HepG2 (cell line): ENCODE measurements at regions of chr17 and their contacts with region 1.

Region 1: GRCh38 chr17:57561072-57561861 is 183.8 kb downstream of the CCDC182 start:
- DNase-seq: peak; percentile 99
- ATAC-seq: peak; percentile 93
- H3K4me3 ChIP-seq: peak overlapping the region in 2 of 3 experiments; percentile 21 to 49; a peak in 4 of 6 replicates
- H3K27ac ChIP-seq: peak overlapping the region; percentile 82
- H3K4me1 ChIP-seq: peaks cover 65% of the 10 kb centered on the region
- H3K27me3 ChIP-seq: no peaks in the 10 kb centered on the region
- CTCF ChIP-seq: peak; percentile 51
- EP300 ChIP-seq: peak; percentile 99 to 100
- POLR2A ChIP-seq: peak; percentile 60 to 71
- RAD21 ChIP-seq: peak; percentile 77

Region 2: DNA sequence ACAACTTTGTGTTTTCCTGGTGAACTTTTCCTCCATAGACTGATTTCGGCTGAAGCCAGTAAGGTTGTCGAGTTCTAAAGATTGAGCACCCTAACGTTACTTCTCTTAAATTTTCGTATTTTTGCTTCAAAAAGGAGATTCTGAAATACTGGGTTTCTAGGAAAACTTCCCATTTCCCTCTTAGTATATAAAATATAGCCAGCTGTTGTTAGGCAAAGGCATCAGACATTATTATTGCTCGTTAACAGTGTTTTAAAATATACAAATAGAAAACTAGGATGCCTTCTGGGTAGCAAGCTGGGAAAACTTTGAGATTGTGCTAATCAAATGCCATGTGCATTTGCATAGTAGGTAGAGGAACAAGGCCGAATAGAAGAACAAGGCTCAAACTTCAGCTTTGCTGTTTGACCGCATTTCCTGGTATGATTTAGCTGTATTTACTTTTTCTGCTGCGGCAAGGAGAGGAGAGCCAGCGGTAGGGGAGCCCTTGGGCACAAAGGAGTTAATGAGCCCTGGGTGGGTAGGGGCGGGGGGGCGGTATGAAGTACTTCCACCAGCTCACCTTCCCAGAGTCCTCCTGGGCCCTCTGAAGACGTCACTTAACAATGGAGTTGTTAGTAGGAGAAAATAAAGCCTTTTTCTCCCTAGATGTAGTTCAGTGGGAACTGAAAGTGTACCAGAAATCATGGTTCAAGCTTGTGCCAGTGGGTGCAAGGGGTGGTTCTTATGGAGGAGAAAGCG is 153.0 kb before region 1 on chr17:
- CTCF ChIA-PET with region 1: no interaction called
- POLR2A ChIA-PET with region 1: interaction called, 14 read pairs
- in situ Hi-C with region 1: no loop called
- intact Hi-C with region 1: no loop called
- DNase-seq: peak; percentile 86
- ATAC-seq: peak; percentile 27
- H3K4me3 ChIP-seq: peak overlapping the region; percentile 26 to 57 (median 51)
- H3K27ac ChIP-seq: peak overlapping the region; percentile 96
- H3K4me1 ChIP-seq: peaks cover 100% of the 10 kb centered on the region
- H3K27me3 ChIP-seq: no peaks in the 10 kb centered on the region
- CTCF ChIP-seq: no peak
- EP300 ChIP-seq: peak in 1 of 2 experiments; percentile 41; a peak in 1 of 4 replicates
- POLR2A ChIP-seq: peak in 1 of 2 experiments; percentile 39; a peak in 1 of 4 replicates
- RAD21 ChIP-seq: no peak

Region 3: GRCh38 chr17:57455063-57455914 is 106.0 kb before region 1 on chr17:
- CTCF ChIA-PET with region 1: interaction called, 3 read pairs
- POLR2A ChIA-PET with region 1: interaction called, 13 read pairs
- in situ Hi-C with region 1: loop called (anchors 5 kb)
- intact Hi-C with region 1: loop called (anchors 1 kb)
- DNase-seq: no peak
- ATAC-seq: no peak
- H3K4me3 ChIP-seq: no peak overlapping the region
- H3K27ac ChIP-seq: no peak overlapping the region
- H3K4me1 ChIP-seq: peaks cover 22% of the 10 kb centered on the region
- H3K27me3 ChIP-seq: no peaks in the 10 kb centered on the region
- CTCF ChIP-seq: no peak
- EP300 ChIP-seq: no peak
- POLR2A ChIP-seq: no peak
- RAD21 ChIP-seq: no peak

Region 4: DNA sequence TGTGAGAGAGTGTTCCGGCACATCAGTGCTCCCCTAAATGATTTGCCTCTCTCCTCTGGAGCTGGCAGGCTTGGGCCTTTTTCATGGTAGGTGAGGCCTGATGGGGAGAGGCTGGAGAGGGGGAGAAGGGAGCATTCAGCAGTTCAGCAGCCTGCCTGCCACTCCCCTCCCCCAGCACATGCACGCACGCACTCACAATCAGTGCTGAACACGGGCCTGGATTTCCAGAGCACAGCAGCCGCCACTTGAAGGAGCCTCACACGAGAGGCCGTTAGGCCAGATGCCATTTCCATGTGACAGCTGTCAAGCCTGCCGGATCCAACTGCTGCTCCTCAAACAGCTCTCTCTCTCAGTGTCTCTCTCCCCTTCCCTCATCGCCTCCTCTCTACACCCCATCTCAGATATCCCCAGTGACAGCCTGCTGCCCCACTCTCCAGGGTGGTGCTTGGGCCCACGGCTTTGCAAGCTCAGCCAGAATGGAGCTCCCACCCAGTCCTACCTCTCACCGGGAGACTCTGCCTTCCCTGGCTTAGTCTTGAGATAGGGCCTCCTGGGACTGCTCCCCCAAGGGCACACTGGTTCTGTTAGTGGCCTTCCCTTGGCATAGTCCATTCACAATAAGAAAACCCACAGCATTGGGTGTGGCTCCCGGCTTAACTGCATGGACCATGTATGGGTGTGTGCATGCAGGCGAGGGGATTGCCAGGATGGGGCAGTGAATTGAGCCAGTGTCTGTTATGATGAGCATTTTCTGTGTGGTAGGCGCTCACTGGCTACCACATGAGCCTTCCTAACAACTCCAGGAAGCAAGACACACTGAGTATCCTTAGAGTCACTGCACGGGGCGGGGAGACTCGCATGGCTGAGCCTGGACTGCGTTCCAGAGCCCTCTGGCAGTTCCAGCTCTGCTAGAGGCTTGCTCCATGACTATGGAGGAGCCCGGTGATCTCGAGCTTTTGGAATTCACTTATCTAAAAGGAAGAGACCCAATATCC is 42.4 kb before region 1 on chr17:
- CTCF ChIA-PET with region 1: no interaction called
- POLR2A ChIA-PET with region 1: interaction called, 65 read pairs
- in situ Hi-C with region 1: no loop called
- intact Hi-C with region 1: loop called (anchors 1 kb)
- DNase-seq: no peak
- ATAC-seq: no peak
- H3K4me3 ChIP-seq: no peak overlapping the region
- H3K27ac ChIP-seq: peak overlapping the region; percentile 95
- H3K4me1 ChIP-seq: peaks cover 89% of the 10 kb centered on the region
- H3K27me3 ChIP-seq: no peaks in the 10 kb centered on the region; a peak in 1 of 5 replicates
- CTCF ChIP-seq: no peak
- EP300 ChIP-seq: no peak
- POLR2A ChIP-seq: no peak
- RAD21 ChIP-seq: no peak

Region 5: DNA sequence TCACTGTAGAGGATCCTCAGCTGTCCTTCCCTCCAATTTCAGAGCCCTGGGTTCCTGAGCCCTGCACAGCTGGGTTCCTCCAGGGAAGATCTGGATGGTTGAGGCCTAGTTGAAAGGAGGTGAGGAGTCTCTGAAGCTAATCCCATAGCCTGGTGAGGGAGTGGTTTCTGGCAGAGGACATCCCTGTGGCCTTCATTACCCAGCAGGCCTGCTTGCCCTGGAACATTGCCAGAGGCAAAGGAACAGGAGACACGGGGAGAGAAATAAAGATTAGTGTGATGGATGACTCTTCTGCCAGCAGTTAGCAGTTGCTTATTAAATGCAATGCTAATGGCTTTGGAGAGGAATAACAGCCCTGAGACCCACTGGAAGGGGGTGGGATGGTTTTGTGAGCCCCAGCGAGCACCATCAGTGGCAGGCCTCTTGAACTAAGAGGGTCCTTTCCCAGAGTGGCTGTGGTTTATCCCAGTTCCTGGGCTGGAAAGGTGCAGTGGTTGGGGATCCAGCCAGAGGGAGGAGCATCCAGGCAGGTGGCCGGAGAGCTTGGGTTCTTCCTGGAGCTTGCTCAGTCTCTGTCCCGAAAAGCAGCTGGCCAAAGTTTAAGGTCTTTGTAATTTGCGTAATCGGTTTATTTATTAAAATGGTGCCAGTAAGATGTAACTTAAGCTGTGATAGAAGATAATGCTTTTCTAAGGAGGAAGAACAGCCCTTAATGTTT is 25.9 kb before region 1 on chr17:
- CTCF ChIA-PET with region 1: no interaction called
- POLR2A ChIA-PET with region 1: interaction called, 23 read pairs
- in situ Hi-C with region 1: no loop called
- intact Hi-C with region 1: loop called (anchors 1 kb)
- DNase-seq: no peak
- ATAC-seq: no peak
- H3K4me3 ChIP-seq: no peak overlapping the region
- H3K27ac ChIP-seq: peak overlapping the region; percentile 14
- H3K4me1 ChIP-seq: peaks cover 97% of the 10 kb centered on the region
- H3K27me3 ChIP-seq: no peaks in the 10 kb centered on the region
- CTCF ChIP-seq: no peak
- EP300 ChIP-seq: peak in 1 of 2 experiments; percentile 18; a peak in 1 of 4 replicates
- POLR2A ChIP-seq: no peak
- RAD21 ChIP-seq: no peak

Region 6: GRCh38 chr17:57577751-57578607 is 16.7 kb after region 1 on chr17:
- CTCF ChIA-PET with region 1: no interaction called
- POLR2A ChIA-PET with region 1: interaction called, 113 read pairs
- in situ Hi-C with region 1: no loop called
- intact Hi-C with region 1: loop called (anchors 1 kb)
- DNase-seq: peak; percentile 95
- ATAC-seq: peak; percentile 80
- H3K4me3 ChIP-seq: peak overlapping the region; percentile 17 to 56 (median 24); a peak in 5 of 6 replicates
- H3K27ac ChIP-seq: peak overlapping the region; percentile 75
- H3K4me1 ChIP-seq: peaks cover 84% of the 10 kb centered on the region
- H3K27me3 ChIP-seq: no peaks in the 10 kb centered on the region
- CTCF ChIP-seq: no peak; the same call in 1 of the 2 replicates
- EP300 ChIP-seq: peak; percentile 77 to 96; a peak in 3 of 4 replicates
- POLR2A ChIP-seq: 0 out of 4 replicates have a peak, but pooled peaks of 1 of the 2 experiments have one; percentile 13
- RAD21 ChIP-seq: no peak